Endothelial cell of umbilical vein (primary cell): ENCODE measurements at regions of chr3 and their contacts with region 1.

Region 1: DNA sequence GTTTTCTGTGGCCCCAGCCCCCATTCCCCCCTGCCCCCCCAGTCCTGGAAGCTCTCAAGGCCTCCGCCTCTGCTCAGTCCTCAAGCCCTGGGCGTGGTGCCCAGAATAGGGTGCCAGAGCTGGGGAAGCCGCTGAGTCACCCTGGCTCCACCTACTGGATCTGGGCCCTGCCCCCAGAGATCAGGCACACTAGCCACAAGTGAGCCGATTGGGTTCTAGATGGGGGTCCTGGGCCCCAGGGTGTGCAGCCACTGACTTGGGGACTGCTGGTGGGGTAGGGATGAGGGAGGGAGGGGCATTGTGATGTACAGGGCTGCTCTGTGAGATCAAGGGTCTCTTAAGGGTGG is 5.7 kb downstream of the EIF4G1 start:
- DNase-seq: peak; percentile 94
- H3K4me3 ChIP-seq: no peak overlapping the region
- H3K27ac ChIP-seq: peak overlapping the region; percentile 38
- H3K4me1 ChIP-seq: peaks cover 45% of the 10 kb centered on the region
- H3K27me3 ChIP-seq: no peaks in the 10 kb centered on the region
- CTCF ChIP-seq: no peak
- POLR2A ChIP-seq: no peak

Region 2: GRCh38 chr3:184005941-184006507 is 314.0 kb before region 1 on chr3:
- CTCF ChIA-PET with region 1: no interaction called
- POLR2A ChIA-PET with region 1: no interaction called
- dilution Hi-C with region 1: no loop called
- intact Hi-C with region 1: no loop called
- DNase-seq: peak; percentile 69
- H3K4me3 ChIP-seq: peak overlapping the region in 1 of 3 experiments; percentile 27
- H3K27ac ChIP-seq: no peak overlapping the region
- H3K4me1 ChIP-seq: peaks cover 15% of the 10 kb centered on the region
- H3K27me3 ChIP-seq: no peaks in the 10 kb centered on the region
- CTCF ChIP-seq: no peak
- POLR2A ChIP-seq: no peak

Region 3: DNA sequence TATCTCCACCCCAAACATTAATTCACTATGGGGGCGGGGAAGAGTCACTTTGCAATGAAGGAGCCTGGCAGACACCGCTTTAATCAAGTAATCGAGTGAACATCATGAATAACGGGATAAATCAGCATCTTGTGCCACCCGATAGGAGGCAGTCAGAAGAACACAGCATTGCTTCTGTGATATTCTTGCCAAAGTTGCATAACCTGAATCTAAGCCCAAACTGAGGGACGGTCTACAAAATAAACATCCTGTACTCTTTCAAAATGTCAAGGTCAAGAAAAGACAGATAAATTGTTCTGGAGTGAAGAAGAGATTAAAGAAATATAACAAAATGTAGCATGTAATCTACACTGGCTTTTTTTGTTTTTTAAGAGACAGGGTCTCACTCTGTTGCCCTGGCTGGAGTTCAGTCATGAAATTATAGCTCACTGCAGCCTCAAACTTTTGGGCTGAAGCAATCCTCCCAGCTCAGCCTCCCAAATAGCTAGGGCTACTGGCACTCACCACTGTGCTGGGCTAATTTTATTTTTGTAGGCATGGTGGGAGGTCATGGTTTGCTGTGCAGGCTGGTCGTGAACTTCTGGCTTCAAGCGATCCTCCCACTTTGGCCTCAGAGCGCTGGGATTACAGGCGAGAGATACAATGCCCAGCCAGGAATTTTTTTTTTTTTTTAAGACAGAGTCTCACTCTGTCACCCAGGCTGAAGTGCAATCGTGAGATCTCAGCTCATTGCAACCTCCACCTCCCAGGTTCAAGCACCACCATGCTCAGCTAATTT is 110.7 kb before region 1 on chr3:
- CTCF ChIA-PET with region 1: no interaction called
- POLR2A ChIA-PET with region 1: no interaction called
- dilution Hi-C with region 1: no loop called
- intact Hi-C with region 1: no loop called
- DNase-seq: no peak
- H3K4me3 ChIP-seq: no peak overlapping the region
- H3K27ac ChIP-seq: no peak overlapping the region
- H3K4me1 ChIP-seq: no peaks in the 10 kb centered on the region
- H3K27me3 ChIP-seq: peaks cover 7 to 11% of the 10 kb centered on the region in 2 experiments
- CTCF ChIP-seq: no peak
- POLR2A ChIP-seq: no peak

Region 4: DNA sequence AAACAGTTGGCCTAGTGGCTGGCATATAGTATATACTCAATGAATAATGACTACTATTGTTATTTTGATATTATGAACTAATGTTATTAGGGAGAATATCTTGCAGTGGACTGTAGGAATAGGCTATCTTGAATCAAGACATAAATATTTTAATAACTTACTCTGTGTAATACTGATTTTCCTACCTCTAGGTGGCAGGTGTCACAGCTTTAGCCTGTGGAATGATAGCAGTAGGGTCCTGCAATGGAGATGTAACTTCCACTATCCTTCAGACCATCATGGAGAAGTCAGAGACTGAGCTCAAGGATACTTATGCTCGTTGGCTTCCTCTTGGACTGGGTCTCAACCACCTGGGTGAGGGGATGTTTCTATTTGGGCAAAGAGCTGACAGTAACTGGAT is 14.5 kb before region 1 on chr3:
- CTCF ChIA-PET with region 1: interaction called, 10 read pairs
- POLR2A ChIA-PET with region 1: no interaction called
- dilution Hi-C with region 1: no loop called
- intact Hi-C with region 1: no loop called
- DNase-seq: peak; percentile 42
- H3K4me3 ChIP-seq: no peak overlapping the region
- H3K27ac ChIP-seq: no peak overlapping the region
- H3K4me1 ChIP-seq: peaks cover 3% of the 10 kb centered on the region
- H3K27me3 ChIP-seq: no peaks in the 10 kb centered on the region
- CTCF ChIP-seq: peak; percentile 23 to 29
- POLR2A ChIP-seq: no peak